ENCODE measurements at regions of chr4 and their contacts with region 1.

Region 1: DNA sequence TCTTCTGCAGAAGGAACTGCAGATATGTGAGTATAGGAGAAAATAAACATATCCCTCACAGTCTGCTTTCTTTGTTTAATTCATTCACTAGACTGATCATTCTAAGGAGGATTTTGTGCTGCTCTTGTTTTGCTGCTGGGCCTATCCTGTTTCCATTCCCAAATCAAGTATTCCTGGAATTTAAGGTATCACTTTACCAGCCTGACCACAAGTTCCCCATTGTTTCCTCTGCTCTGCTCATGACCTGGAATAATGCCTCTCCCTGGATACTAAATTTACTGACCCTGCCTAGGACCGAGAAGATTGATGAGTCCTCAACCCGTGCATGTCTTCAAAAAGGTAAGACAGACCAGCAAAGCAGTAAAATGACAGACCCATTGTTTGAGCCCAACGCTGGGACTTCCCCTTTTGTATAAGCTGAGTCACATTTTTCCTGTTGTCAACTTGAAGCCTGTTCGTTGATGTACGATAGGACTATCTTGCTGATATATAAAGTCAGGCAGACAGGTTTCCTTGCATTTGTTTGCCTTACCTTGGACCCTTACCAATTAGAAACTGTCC is 85.5 kb upstream of the TET2 start:
- DNase-seq: peak; percentile 85
- ATAC-seq: peak; percentile 68
- H3K4me3 ChIP-seq: peak overlapping the region; percentile 45
- H3K27ac ChIP-seq: peak overlapping the region; percentile 94
- H3K4me1 ChIP-seq: peaks cover 47% of the 10 kb centered on the region
- H3K27me3 ChIP-seq: no peaks in the 10 kb centered on the region
- CTCF ChIP-seq: no peak
- EP300 ChIP-seq: peak in 1 of 2 experiments; percentile 50; a peak in 2 of 4 replicates
- POLR2A ChIP-seq: no peak
- RAD21 ChIP-seq: 0 out of 2 replicates have a peak, but pooled peaks have one; percentile 9

Region 2: DNA sequence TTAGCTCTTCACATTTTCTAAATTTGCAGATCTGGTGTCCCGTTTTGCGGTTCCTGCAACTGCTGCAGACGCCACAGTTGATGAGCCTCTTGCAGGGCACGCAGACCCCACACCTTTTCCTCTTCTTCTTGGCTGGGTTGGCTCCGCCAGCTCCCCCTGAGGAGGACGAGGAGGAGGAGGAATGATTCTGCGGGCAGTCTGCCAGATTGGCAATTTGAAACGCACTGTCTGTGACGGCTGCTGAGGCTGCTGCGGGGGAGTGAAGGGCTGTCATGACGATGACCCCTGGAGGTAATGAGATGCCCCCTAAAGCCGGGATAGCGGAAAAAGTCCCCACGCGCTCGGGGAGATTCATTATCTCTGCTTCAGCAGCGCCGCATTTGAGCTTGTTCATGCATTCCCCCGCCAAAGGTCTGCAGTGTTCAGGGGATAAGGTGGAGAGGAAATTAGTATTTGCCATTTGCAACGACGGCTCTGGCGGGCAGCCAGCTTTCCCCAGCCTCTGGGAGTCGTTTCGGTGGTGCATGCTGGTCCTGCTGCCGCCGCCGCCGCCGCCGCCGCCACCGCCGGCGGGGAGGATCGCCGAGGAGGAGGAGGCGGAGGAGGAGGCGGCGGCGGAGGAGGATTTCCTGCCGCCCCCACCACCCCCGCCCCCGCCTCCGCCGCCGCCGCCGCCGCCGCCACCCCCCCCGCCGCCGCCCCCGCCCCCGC is 570.3 kb before region 1 on chr4:
- CTCF ChIA-PET with region 1: no interaction called
- POLR2A ChIA-PET with region 1: no interaction called
- RAD21 ChIA-PET with region 1: no interaction called
- SMC1A ChIA-PET with region 1: no interaction called
- in situ Hi-C with region 1: no loop called
- intact Hi-C with region 1: loop called (anchors 5 kb)
- DNase-seq: no peak
- ATAC-seq: peak; percentile 7
- H3K4me3 ChIP-seq: peak overlapping the region; percentile 78
- H3K27ac ChIP-seq: peak overlapping the region; percentile 97
- H3K4me1 ChIP-seq: peaks cover 16% of the 10 kb centered on the region
- H3K27me3 ChIP-seq: no peaks in the 10 kb centered on the region
- CTCF ChIP-seq: no peak
- EP300 ChIP-seq: no peak
- POLR2A ChIP-seq: peak; percentile 63
- RAD21 ChIP-seq: no peak

Region 3: DNA sequence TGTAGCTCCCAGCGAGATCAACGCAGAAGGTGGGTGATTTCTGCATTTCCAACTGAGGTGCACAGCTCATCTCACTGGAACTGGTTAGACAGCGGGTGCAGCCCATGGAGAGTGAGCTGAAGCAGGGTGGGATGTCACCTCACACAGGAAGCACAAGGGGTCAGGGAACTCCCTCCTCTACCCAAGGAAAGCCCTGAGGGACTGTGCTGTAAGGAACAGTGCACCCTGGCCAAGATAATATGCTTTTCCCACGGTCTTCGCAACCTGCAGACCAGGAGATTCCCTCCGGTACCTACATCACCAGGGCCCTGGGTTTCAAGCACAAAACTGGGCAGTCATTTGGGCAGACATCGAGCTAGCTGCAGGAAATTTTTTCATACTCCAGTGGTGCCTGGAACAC is 130.9 kb before region 1 on chr4:
- CTCF ChIA-PET with region 1: interaction called, 3 read pairs
- POLR2A ChIA-PET with region 1: no interaction called
- RAD21 ChIA-PET with region 1: no interaction called
- SMC1A ChIA-PET with region 1: no interaction called
- in situ Hi-C with region 1: no loop called
- intact Hi-C with region 1: loop called (anchors 2 kb)
- DNase-seq: peak; percentile 51
- ATAC-seq: peak; percentile 54
- H3K4me3 ChIP-seq: no peak overlapping the region; the same call in 1 of the 2 replicates
- H3K27ac ChIP-seq: peak overlapping the region; percentile 62
- H3K4me1 ChIP-seq: peaks cover 14% of the 10 kb centered on the region
- H3K27me3 ChIP-seq: no peaks in the 10 kb centered on the region
- CTCF ChIP-seq: no peak
- EP300 ChIP-seq: no peak
- POLR2A ChIP-seq: no peak
- RAD21 ChIP-seq: no peak

Region 4: DNA sequence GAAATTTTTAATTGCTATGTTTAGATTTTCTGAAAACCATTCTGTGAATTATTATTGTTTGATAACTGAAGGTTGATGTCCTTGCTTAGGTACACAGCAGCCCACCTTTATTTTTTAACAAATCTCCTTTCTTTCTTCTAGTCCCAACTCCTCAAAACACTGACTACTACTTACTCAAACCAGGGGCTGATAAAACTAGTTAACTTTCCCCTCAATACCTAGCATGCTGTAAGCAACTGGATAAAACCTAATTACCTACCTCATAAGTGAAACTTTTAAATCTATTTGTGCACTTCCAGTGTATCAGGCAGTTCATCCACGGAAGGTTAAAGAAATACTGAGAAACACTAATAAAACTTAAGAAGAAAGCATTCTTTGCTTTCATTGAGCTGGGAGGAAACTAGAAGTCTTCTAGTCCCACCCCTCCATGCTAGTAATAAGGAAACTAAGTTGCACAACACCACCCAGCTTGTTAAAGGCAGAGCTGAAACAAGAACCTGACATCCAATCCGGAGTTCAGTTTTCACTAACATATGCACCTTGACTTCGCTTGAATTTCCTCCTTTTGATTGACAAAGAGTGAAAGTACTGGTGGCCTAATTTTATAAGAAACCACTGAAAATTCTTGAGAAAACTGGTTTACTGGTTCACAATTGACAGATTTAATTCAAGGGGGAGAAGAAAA is 94.7 kb before region 1 on chr4:
- CTCF ChIA-PET with region 1: interaction called, 3 read pairs
- POLR2A ChIA-PET with region 1: no interaction called
- RAD21 ChIA-PET with region 1: interaction called, 6 read pairs
- SMC1A ChIA-PET with region 1: interaction called, 12 read pairs
- in situ Hi-C with region 1: no loop called
- intact Hi-C with region 1: loop called (anchors 1 kb)
- DNase-seq: peak; percentile 96
- ATAC-seq: peak; percentile 95
- H3K4me3 ChIP-seq: peak overlapping the region; percentile 51; the same call in 1 of the 2 replicates
- H3K27ac ChIP-seq: peak overlapping the region; percentile 91
- H3K4me1 ChIP-seq: peaks cover 35% of the 10 kb centered on the region
- H3K27me3 ChIP-seq: no peaks in the 10 kb centered on the region
- CTCF ChIP-seq: no peak
- EP300 ChIP-seq: peak in 1 of 2 experiments; percentile 40; a peak in 1 of 4 replicates
- POLR2A ChIP-seq: no peak
- RAD21 ChIP-seq: peak; percentile 23; the same call in 1 of the 2 replicates

Region 5: GRCh38 chr4:105191621-105192210 is 130.5 kb after region 1 on chr4:
- CTCF ChIA-PET with region 1: no interaction called
- POLR2A ChIA-PET with region 1: no interaction called
- RAD21 ChIA-PET with region 1: interaction called, 8 read pairs
- SMC1A ChIA-PET with region 1: interaction called, 3 read pairs
- in situ Hi-C with region 1: no loop called
- intact Hi-C with region 1: loop called (anchors 1 kb)
- DNase-seq: peak; percentile 81
- ATAC-seq: peak; percentile 65
- H3K4me3 ChIP-seq: 0 out of 2 replicates have a peak overlapping the region, but pooled peaks have one; percentile 10
- H3K27ac ChIP-seq: peak overlapping the region; percentile 81
- H3K4me1 ChIP-seq: peaks cover 46% of the 10 kb centered on the region
- H3K27me3 ChIP-seq: no peaks in the 10 kb centered on the region
- CTCF ChIP-seq: no peak
- EP300 ChIP-seq: peak in 1 of 2 experiments; percentile 72; a peak in 2 of 4 replicates
- POLR2A ChIP-seq: no peak
- RAD21 ChIP-seq: peak; percentile 34; the same call in 1 of the 2 replicates

Measured in GM12878 (cell line).